ENCODE measurements at regions of chrX and their contacts with region 1.

Region 1: DNA sequence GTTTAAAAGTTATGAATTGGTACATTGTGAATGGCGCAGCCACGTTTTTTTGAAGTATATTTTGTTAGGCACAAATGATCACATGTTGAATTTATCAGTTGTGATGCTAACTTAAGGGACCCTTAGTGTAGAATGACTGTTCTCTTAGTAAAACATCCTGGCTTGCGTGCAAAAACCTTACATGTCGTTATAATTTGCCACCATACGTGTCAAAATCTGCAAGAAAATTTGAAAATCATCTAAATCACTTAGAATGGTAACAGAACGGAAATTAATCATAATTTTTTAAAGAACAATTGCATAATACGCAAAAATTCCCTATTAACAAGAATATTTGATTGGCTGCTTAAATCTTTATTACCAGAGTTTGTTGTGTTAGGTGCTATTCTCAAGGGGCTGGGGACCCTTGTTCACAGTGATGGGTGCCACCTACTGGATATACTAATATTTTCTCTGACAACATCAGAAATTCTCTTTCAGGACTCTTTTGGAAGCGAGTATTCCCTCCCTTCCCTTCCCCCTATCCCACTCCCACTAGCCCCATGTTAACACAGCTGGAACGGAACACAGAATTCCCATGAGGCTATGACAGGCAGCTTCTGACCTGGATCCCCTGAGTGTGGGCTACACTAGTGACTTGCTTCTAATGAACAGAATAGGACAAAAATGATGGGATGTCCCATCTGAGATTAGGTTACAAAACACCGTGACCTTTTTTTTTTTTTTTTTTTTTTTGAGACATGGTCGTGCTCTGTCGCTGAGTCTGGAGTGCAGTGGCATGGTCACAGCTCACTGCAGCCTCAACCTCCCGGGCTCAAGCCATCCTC is 71.8 kb downstream of the SUPT20HL2 start:
- DNase-seq: peak; percentile 71
- H3K4me3 ChIP-seq: no peak overlapping the region
- H3K27ac ChIP-seq: no peak overlapping the region
- H3K4me1 ChIP-seq: peaks cover 0 to 13% of the 10 kb centered on the region in 2 experiments; a peak in 1 of 4 replicates
- H3K27me3 ChIP-seq: no peaks in the 10 kb centered on the region; the same call in 1 of the 2 replicates
- CTCF ChIP-seq: peak; percentile 67
- EP300 ChIP-seq: no peak
- RAD21 ChIP-seq: peak; percentile 82

Region 2: GRCh38 chrX:24081661-24082264 is 160.3 kb before region 1 on chrX:
- CTCF ChIA-PET with region 1: interaction called, 14 read pairs
- POLR2A ChIA-PET with region 1: no interaction called
- DNase-seq: peak; percentile 51
- H3K4me3 ChIP-seq: peak overlapping the region in 1 of 2 experiments; percentile 39; a peak in 1 of 4 replicates
- H3K27ac ChIP-seq: 0 out of 4 replicates have a peak overlapping the region, but pooled peaks of 1 of the 2 experiments have one; percentile 3
- H3K4me1 ChIP-seq: no peaks in the 10 kb centered on the region
- H3K27me3 ChIP-seq: no peaks in the 10 kb centered on the region
- CTCF ChIP-seq: peak; percentile 73
- EP300 ChIP-seq: no peak
- RAD21 ChIP-seq: peak; percentile 71

Region 3: GRCh38 chrX:24117258-24117657 is 124.8 kb before region 1 on chrX:
- CTCF ChIA-PET with region 1: no interaction called
- POLR2A ChIA-PET with region 1: no interaction called
- DNase-seq: no peak
- H3K4me3 ChIP-seq: no peak overlapping the region
- H3K27ac ChIP-seq: peak overlapping the region; percentile 23 to 43; a peak in 2 of 4 replicates
- H3K4me1 ChIP-seq: no peaks in the 10 kb centered on the region; a peak in 1 of 4 replicates
- H3K27me3 ChIP-seq: no peaks in the 10 kb centered on the region
- CTCF ChIP-seq: no peak
- EP300 ChIP-seq: no peak
- RAD21 ChIP-seq: no peak

Region 4: DNA sequence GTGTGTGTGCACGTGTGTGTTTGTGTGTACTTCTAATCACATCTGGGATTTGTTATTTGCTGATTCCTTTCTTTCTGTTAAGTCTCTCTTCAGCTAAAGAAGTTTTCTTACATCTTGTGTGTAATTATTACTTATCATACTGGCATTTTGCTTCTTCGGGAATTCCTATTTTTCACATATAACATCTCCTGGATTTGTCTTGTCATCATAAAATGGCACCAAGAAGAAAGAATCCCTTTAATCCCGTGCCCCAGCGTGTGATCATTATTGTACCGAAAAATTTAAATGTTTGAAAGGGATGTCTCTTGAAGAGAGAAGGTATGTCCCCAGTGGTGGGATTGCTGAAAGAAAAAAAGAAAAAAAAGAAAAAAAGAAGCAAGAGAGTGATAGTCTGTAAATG is 20.2 kb before region 1 on chrX:
- CTCF ChIA-PET with region 1: no interaction called
- POLR2A ChIA-PET with region 1: no interaction called
- DNase-seq: no peak
- H3K4me3 ChIP-seq: no peak overlapping the region
- H3K27ac ChIP-seq: no peak overlapping the region
- H3K4me1 ChIP-seq: no peaks in the 10 kb centered on the region
- H3K27me3 ChIP-seq: no peaks in the 10 kb centered on the region
- CTCF ChIP-seq: no peak
- EP300 ChIP-seq: no peak
- RAD21 ChIP-seq: no peak

Region 5: DNA sequence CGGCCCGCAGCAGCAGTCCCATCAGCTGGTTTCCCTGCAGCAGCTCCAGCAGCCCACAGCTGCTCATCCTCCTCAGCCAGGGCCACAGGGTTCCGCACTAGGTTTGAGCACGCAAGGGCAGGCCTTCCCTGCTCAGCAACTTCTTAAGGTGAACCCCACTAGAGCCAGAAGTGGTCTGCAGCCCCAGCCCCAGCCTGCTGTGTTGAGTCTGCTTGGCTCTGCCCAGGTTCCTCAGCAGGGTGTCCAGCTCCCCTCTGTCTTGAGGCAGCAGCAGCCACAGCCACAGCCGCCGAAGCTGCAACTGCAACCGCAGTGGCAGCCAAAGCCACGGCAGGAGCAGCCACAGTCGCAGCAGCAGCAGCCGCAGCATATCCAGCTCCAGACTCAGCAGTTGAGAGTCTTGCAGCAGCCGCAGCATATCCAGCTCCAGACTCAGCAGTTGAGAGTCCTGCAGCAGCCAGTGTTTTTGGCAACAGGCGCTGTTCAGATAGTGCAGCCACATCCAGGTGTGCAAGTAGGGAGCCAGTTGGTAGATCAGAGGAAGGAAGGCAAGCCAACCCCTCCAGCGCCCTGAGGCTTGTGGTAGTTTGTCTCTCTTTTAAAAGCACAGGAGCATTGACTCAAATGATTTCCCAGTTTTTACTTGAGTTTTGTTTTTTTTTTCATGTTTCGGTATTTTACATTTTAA is 123.0 kb after region 1 on chrX:
- CTCF ChIA-PET with region 1: no interaction called
- POLR2A ChIA-PET with region 1: no interaction called
- DNase-seq: no peak
- H3K4me3 ChIP-seq: no peak overlapping the region
- H3K27ac ChIP-seq: no peak overlapping the region
- H3K4me1 ChIP-seq: no peaks in the 10 kb centered on the region
- H3K27me3 ChIP-seq: no peaks in the 10 kb centered on the region; the same call in 1 of the 2 replicates
- CTCF ChIP-seq: no peak
- EP300 ChIP-seq: no peak
- RAD21 ChIP-seq: no peak

Measured in SK-N-SH (cell line).